ENCODE measurements at regions of chr6 and their contacts with region 1.

Region 1: DNA sequence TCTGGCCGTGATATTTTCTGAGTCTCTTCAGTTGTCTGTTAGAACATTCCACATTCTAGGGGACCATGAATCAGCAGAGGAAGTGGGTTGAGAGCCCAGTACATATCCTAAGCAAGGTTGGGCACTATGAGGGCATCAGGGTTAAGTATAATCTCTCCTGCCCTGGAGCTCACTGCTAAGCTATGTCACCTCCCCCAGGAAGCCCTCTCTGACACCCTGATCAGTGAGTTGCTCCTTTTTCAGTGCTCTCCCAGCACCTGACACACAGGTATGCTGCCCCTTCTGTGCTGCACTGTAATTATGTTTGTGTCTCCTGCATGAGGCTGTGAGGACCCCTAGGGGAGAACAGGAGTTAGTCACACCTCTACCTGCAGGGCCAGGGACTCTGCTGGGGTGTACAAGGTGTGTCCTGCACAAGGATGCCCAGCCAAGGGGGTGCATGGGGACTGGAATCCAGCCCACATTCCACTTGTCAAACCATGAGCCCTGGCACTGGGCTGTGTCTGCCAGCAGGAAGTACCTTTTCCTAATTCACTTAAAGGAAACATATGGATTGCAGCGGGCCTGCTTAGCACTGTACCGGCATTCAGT is 3.9 kb downstream of the RAB44 start:
- DNase-seq: no peak
- H3K4me3 ChIP-seq: no peak overlapping the region
- H3K27ac ChIP-seq: no peak overlapping the region
- H3K4me1 ChIP-seq: no peaks in the 10 kb centered on the region
- H3K27me3 ChIP-seq: no peaks in the 10 kb centered on the region
- CTCF ChIP-seq: peak; percentile 74 to 88 (median 85)
- EP300 ChIP-seq: no peak
- POLR2A ChIP-seq: no peak
- RAD21 ChIP-seq: peak; percentile 89 to 92

Region 2: GRCh38 chr6:36491378-36491965 is 210.0 kb before region 1 on chr6:
- CTCF ChIA-PET with region 1: no interaction called
- POLR2A ChIA-PET with region 1: no interaction called
- DNase-seq: peak in 1 of 2 experiments; percentile 23
- H3K4me3 ChIP-seq: no peak overlapping the region
- H3K27ac ChIP-seq: no peak overlapping the region
- H3K4me1 ChIP-seq: peaks cover 0 to 7% (median 3%) of the 10 kb centered on the region in 4 experiments; a peak in 2 of 7 replicates
- H3K27me3 ChIP-seq: no peaks in the 10 kb centered on the region
- CTCF ChIP-seq: no peak
- EP300 ChIP-seq: no peak
- POLR2A ChIP-seq: no peak
- RAD21 ChIP-seq: no peak

Region 3: GRCh38 chr6:36533321-36533720 is 168.2 kb before region 1 on chr6:
- CTCF ChIA-PET with region 1: no interaction called
- POLR2A ChIA-PET with region 1: no interaction called
- DNase-seq: no peak
- H3K4me3 ChIP-seq: no peak overlapping the region
- H3K27ac ChIP-seq: no peak overlapping the region
- H3K4me1 ChIP-seq: no peaks in the 10 kb centered on the region
- H3K27me3 ChIP-seq: no peaks in the 10 kb centered on the region
- CTCF ChIP-seq: no peak
- EP300 ChIP-seq: no peak
- POLR2A ChIP-seq: no peak
- RAD21 ChIP-seq: no peak

Region 4: GRCh38 chr6:36633915-36634314 is 67.6 kb before region 1 on chr6:
- CTCF ChIA-PET with region 1: interaction called, 14 read pairs
- POLR2A ChIA-PET with region 1: no interaction called
- DNase-seq: no peak
- H3K4me3 ChIP-seq: no peak overlapping the region
- H3K27ac ChIP-seq: no peak overlapping the region
- H3K4me1 ChIP-seq: peaks cover 0 to 4% (median 1%) of the 10 kb centered on the region in 4 experiments; a peak in 2 of 7 replicates
- H3K27me3 ChIP-seq: no peaks in the 10 kb centered on the region
- CTCF ChIP-seq: no peak
- EP300 ChIP-seq: no peak
- POLR2A ChIP-seq: no peak
- RAD21 ChIP-seq: no peak

Measured in H1 (cell line).